ENCODE measurements at regions of chr12 and their contacts with region 1.

Region 1: GRCh38 chr12:57452937-57453509 is 2.1 kb upstream of the INHBE start:
- DNase-seq: peak; percentile 65 to 82
- ATAC-seq: peak; percentile 68 to 71
- H3K4me3 ChIP-seq: no peak overlapping the region
- H3K27ac ChIP-seq: peak overlapping the region; percentile 81 to 92 (median 90)
- H3K4me1 ChIP-seq: peaks cover 31 to 51% of the 10 kb centered on the region in 2 donors
- H3K27me3 ChIP-seq: no peaks in the 10 kb centered on the region
- CTCF ChIP-seq: peak; percentile 92 to 96 (median 95)
- POLR2A ChIP-seq: no peak

Region 2: GRCh38 chr12:57238854-57239554 is 214.0 kb before region 1 on chr12:
- in situ Hi-C with region 1: no loop called
- intact Hi-C with region 1: loop called (anchors 2 kb)
- DNase-seq: peak; percentile 67 to 80
- ATAC-seq: peak; percentile 55
- H3K4me3 ChIP-seq: peak overlapping the region; percentile 47 to 69 (median 60)
- H3K27ac ChIP-seq: peak overlapping the region in 3 of 4 donors; percentile 57 to 82 (median 58)
- H3K4me1 ChIP-seq: peaks cover 36 to 54% of the 10 kb centered on the region in 2 donors
- H3K27me3 ChIP-seq: peaks cover 19 to 21% (median 21%) of the 10 kb centered on the region in 3 donors
- CTCF ChIP-seq: peak; percentile 100
- POLR2A ChIP-seq: no peak

Region 3: DNA sequence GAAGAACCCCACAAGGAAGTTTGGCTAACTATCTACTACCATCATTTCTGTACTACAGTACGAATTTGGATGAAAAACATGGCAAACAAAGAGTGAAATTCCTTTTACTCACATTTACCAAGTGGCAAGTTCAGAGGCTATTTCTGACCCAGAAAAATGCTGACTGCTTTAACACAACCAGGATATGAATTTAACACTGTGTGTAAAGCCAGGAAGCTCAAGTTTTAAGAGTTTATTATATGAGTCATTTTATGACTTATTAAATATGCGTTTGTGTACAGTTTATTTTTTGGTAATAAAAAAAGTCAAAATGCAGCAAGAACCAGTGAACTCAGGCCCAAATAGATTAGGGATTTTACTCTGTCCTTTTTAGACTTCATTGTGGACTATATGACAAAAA is 143.6 kb before region 1 on chr12:
- in situ Hi-C with region 1: loop called in 2 of 4 experiments (anchors 5 to 10 kb)
- intact Hi-C with region 1: loop called (anchors 1 kb)
- DNase-seq: no peak
- ATAC-seq: no peak
- H3K4me3 ChIP-seq: no peak overlapping the region
- H3K27ac ChIP-seq: no peak overlapping the region
- H3K4me1 ChIP-seq: peaks cover 0 to 5% of the 10 kb centered on the region in 2 donors
- H3K27me3 ChIP-seq: no peaks in the 10 kb centered on the region
- CTCF ChIP-seq: no peak
- POLR2A ChIP-seq: no peak

Region 4: GRCh38 chr12:57352166-57352565 is 100.9 kb before region 1 on chr12:
- in situ Hi-C with region 1: no loop called
- intact Hi-C with region 1: no loop called
- DNase-seq: no peak
- ATAC-seq: no peak
- H3K4me3 ChIP-seq: no peak overlapping the region
- H3K27ac ChIP-seq: no peak overlapping the region
- H3K4me1 ChIP-seq: no peaks in the 10 kb centered on the region
- H3K27me3 ChIP-seq: no peaks in the 10 kb centered on the region
- CTCF ChIP-seq: no peak
- POLR2A ChIP-seq: no peak

Region 5: DNA sequence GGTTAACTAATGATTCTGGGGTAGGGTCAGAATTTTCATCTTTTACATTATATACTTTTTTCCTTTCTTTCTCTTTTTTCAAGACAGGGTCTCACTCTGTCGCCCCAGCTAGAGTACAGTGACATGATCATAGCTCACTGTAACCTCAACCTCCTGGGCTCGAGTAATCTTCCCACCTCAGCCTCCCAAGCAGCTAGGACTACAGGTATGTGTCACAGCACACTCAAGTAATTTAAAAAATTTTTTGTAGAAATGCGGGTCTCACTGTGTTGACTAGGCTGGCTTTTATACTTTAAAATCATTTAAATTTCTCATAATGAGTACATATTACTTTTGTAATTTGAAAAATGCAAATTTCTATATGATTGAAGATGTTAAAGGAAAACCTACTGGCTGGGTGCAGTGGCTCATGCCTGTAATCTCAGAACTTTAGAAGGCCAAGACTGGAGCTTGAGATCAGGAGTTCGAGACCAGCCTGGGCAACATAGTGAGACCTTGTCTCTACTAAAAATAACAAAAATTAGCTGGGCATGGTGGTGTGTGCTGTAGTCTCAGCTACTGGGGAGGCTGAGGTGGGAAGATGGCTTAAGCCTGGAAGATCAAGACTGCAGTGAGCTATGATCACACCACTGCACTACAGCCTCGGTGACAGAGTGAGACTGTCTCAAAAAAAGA is 47.9 kb before region 1 on chr12:
- in situ Hi-C with region 1: no loop called
- intact Hi-C with region 1: no loop called
- DNase-seq: no peak
- ATAC-seq: no peak
- H3K4me3 ChIP-seq: no peak overlapping the region
- H3K27ac ChIP-seq: no peak overlapping the region
- H3K4me1 ChIP-seq: no peaks in the 10 kb centered on the region
- H3K27me3 ChIP-seq: no peaks in the 10 kb centered on the region
- CTCF ChIP-seq: no peak
- POLR2A ChIP-seq: no peak

Region 6: DNA sequence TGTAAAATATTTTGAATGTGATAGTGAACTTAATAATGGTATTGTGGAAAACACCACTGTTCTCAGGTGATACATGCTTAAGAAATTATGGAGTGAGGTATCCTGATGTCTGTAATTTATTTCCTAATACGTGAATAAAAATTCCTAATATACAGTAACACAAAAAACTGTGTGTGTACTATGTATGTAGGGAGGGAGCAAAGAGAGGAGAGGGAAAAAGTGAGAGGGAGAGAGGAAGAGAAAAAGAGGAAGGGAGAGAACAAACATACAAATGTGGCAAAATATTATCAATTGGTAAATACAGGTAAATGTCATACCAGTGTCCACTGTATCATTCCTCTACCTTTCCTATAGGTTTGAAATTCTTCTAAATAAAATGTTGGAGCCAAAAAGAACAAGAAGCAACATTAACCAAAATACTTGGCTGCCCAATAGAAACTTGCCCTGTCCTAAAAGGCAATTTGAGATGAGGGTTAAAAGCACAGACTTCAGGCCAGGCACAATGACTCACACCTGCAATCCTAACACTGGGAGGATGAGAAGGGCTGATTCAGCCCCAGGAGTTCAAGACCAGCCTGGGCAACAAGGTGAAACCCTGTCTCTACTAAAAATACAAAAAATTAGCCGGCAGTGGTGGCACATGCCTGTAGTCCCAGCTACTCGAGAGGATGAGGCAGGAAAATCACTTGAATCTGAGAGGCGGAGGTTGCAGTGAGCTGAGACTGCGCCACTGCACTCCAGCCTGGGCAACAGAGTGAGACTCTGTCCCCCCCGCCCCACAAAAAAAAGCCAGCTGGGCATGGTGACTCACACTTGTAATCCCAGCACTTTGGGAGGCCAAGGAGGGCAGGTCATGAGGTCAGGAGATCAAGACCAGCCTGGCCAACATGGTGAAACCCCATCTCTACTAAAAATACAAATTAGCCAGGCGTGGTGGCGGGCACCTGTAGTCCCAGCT is 36.7 kb before region 1 on chr12:
- in situ Hi-C with region 1: no loop called
- intact Hi-C with region 1: loop called (anchors 5 kb)
- DNase-seq: no peak
- ATAC-seq: peak in 1 of 2 donors; percentile 81
- H3K4me3 ChIP-seq: no peak overlapping the region
- H3K27ac ChIP-seq: peak overlapping the region in 2 of 4 donors; percentile 45 to 56
- H3K4me1 ChIP-seq: peaks cover 10% of the 10 kb centered on the region in 2 donors
- H3K27me3 ChIP-seq: no peaks in the 10 kb centered on the region
- CTCF ChIP-seq: no peak
- POLR2A ChIP-seq: no peak

Measured in gastrocnemius medialis (tissue), 4 donors.